Right ventricle myocardium inferior (tissue), 1 donor: ENCODE measurements at regions of chr9 and their contacts with region 1.

Region 1: DNA sequence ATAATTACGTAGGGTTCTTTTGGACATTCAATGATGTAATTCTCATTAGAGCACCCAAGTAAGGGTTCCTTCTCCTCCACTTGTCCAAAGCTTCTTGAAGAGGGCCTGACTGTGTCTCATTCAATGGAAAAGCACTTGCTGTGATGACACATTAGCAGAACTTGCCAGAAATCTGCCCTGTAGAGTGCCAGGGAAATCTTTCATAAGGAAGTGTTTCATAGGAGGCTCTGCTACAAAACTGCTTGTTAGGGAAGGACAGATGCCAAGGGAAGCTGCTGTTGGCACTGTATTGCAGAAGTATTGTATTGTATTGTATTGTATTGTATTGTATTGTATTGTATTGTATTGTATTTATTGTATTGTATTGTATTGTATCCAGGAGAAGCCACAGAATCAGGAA is 45.5 kb upstream of the MPDZ start:
- DNase-seq: no peak
- ATAC-seq: no peak

Region 2: GRCh38 chr9:13291718-13292117 is 33.3 kb before region 1 on chr9:
- intact Hi-C with region 1: loop called (anchors 5 kb)
- DNase-seq: no peak
- ATAC-seq: no peak

Region 3: DNA sequence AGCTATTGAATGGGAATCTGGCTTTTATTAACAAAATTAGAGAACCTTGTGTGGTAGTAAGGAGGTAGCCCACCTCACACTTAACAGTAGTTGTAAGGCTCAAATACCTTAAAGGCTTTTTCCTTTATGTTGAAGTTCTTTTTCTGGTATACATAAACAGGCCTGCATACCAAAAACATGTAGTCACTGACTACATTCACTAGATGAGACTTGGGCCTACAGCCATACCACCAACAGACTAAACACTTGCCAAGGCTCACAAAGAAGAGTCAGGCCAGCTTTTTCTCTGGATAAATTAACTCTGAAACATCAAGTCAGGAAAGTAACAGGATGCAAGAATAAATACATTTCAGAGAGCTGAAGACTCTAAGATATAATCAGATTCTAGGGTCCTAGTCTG is 33.1 kb after region 1 on chr9:
- intact Hi-C with region 1: no loop called
- DNase-seq: no peak
- ATAC-seq: no peak